OCI-LY7 (cell line): ENCODE measurements at regions of chr18 and their contacts with region 1.

Region 1: DNA sequence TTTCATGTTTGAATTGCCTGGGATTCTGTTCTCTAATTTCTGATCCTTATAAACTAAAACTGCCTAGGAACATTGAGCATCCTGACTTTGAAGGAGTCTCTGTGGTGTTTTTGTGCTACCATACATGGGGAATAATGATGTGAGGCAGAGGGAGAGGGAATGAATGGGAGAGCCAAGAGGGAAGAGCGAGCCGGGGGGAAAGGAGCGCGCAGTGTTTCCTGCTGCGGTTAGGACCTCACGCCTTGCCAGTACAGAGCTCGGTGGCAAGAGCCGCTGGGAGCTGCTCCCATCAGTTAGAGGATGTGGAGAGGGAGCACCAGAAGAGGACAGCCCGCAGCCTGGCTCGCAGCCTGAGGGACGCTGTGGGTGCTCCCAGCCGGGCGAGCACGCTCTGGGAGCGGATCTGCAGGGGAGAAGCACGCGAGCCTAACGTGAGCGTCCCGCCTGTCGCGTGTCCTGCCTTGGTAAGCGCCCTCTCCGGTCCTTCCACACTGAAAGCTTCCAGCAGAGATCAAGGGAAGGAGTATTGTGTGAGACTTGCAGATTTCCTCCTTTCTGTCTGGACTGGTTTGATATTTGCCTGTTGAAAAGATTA is 114.7 kb downstream of the FAM210A start:
- DNase-seq: no peak
- H3K4me3 ChIP-seq: peak overlapping the region; percentile 85
- H3K27ac ChIP-seq: peak overlapping the region; percentile 98
- H3K4me1 ChIP-seq: peaks cover 64% of the 10 kb centered on the region
- CTCF ChIP-seq: 0 out of 2 replicates have a peak, but pooled peaks have one; percentile 16

Region 2: GRCh38 chr18:13464432-13465123 is 147.1 kb before region 1 on chr18:
- CTCF ChIA-PET with region 1: interaction called, 7 read pairs
- POLR2A ChIA-PET with region 1: no interaction called
- intact Hi-C with region 1: loop called (anchors 5 kb)
- DNase-seq: peak; percentile 91
- H3K4me3 ChIP-seq: peak overlapping the region; percentile 70
- H3K27ac ChIP-seq: peak overlapping the region; percentile 65
- H3K4me1 ChIP-seq: peaks cover 29% of the 10 kb centered on the region
- CTCF ChIP-seq: 0 out of 2 replicates have a peak, but pooled peaks have one; percentile 18

Region 3: GRCh38 chr18:13566941-13567746 is 44.6 kb before region 1 on chr18:
- CTCF ChIA-PET with region 1: interaction called, 8 read pairs
- POLR2A ChIA-PET with region 1: interaction called, 65 read pairs
- intact Hi-C with region 1: loop called (anchors 1 kb)
- DNase-seq: peak; percentile 76
- H3K4me3 ChIP-seq: peak overlapping the region; percentile 47
- H3K27ac ChIP-seq: peak overlapping the region; percentile 70
- H3K4me1 ChIP-seq: peaks cover 58% of the 10 kb centered on the region
- CTCF ChIP-seq: no peak

Region 4: DNA sequence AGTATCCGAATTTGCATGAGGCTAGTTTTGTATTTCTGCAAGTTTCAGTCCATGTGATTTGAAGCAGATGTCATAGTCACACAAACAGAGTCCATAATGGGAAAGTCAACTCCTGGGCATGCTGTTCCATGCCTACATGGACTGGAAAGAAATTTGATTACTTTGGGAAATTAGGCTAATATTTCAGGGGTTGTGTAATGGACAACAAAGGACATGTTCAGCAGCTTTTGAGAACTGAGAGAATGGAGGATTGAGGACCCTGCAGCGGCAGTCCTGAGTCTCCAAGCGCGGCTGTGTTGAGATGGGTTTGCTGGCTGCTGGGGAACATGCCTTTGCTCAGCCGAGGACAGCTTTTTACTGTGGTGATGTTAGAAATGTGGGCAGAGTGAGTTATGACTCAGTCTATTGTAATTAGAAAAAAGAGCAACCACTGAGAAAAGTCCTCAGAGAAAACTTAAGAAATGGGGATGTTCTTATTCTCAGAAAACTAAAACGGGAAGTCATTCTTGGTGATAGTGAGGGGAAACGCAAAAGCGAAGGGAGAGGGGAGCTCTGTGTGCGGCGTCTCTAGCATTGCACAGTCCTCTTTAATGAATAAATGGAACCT is 34.5 kb before region 1 on chr18:
- CTCF ChIA-PET with region 1: interaction called, 4 read pairs
- POLR2A ChIA-PET with region 1: interaction called, 63 read pairs
- intact Hi-C with region 1: loop called (anchors 1 kb)
- DNase-seq: no peak
- H3K4me3 ChIP-seq: peak overlapping the region; percentile 35
- H3K27ac ChIP-seq: peak overlapping the region; percentile 8
- H3K4me1 ChIP-seq: peaks cover 39% of the 10 kb centered on the region
- CTCF ChIP-seq: no peak

Region 5: DNA sequence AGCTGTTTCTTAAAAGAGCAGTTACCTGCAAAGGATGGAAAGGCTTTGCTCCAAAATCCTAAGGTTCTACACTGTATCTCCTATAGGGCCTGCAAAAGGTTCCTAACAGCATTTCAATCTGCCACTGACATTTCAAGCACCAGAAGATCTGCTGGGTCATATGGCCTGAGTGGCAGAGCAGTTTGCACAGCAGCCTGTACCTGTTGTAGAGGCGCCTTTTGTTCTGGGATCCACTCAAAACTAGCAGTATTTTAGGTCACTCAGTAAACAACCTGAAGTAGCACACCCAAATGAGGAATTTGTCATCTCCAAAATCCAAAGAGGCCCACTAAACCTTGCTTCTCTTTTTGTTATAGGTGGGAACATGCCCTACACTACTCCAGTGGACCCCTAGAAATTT is 108.4 kb after region 1 on chr18:
- CTCF ChIA-PET with region 1: no interaction called
- POLR2A ChIA-PET with region 1: no interaction called
- intact Hi-C with region 1: loop called (anchors 5 kb)
- DNase-seq: no peak
- H3K4me3 ChIP-seq: no peak overlapping the region
- H3K27ac ChIP-seq: no peak overlapping the region
- H3K4me1 ChIP-seq: peaks cover 14% of the 10 kb centered on the region
- CTCF ChIP-seq: no peak